Psoas muscle (tissue), 8 donors: ENCODE measurements at regions of chr11 and their contacts with region 1.

Region 1: DNA sequence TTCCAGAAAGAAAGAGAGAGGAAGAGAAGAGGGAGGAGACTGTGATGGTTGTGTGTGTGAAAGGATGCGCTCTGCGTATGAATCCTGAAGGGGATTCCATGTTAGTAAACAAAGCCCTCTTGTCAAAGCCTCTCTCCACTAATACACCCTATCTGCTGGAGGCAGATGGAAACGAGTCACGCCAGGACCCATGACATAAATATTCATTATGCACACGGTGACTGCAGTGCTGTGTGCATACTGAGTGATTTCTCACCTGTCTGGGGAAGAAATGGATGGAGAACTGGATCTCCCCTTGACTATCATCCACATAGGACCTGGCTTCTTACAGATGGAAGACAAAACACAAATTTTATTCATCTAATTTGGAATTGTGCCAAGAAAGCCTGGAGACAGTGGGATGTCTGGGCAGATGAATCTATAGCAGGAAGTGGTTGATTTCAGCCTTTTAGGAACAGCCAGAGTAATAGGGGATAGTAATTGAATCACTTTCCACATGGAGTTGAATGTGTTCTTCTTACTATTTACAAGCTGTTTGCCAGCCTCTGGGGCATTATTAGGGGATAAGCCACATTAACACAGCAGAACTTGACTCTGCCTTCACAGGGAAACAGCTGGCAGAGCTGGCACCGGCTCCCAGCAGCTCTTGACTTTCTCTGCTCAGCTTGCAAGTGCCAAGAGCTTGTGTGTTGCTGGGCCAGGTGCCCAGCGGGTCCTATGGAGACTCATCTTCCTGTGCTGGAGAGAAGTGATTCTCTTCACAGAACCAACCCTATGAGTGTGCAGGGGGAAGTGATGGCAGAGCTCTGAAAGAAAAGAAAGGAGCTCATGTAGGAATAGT is 9.0 kb downstream of the MTNR1B start:
- DNase-seq: no peak
- ATAC-seq: no peak
- H3K4me3 ChIP-seq: no peak overlapping the region
- H3K27ac ChIP-seq: no peak overlapping the region
- H3K4me1 ChIP-seq: no peaks in the 10 kb centered on the region
- H3K27me3 ChIP-seq: peaks cover 0 to 2% (median 0%) of the 10 kb centered on the region in 3 donors
- CTCF ChIP-seq: no peak

Region 2: GRCh38 chr11:92917927-92918326 is 60.6 kb before region 1 on chr11:
- intact Hi-C with region 1: no loop called
- DNase-seq: no peak
- ATAC-seq: no peak
- H3K4me3 ChIP-seq: no peak overlapping the region
- H3K27ac ChIP-seq: no peak overlapping the region
- H3K4me1 ChIP-seq: no peaks in the 10 kb centered on the region
- H3K27me3 ChIP-seq: peaks cover 0 to 3% (median 0%) of the 10 kb centered on the region in 3 donors
- CTCF ChIP-seq: no peak

Region 3: GRCh38 chr11:93000511-93001476 is 22.3 kb after region 1 on chr11:
- intact Hi-C with region 1: loop called in 1 of 2 experiments (anchors 2 kb)
- DNase-seq: no peak
- ATAC-seq: no peak
- H3K4me3 ChIP-seq: no peak overlapping the region
- H3K27ac ChIP-seq: no peak overlapping the region
- H3K4me1 ChIP-seq: no peaks in the 10 kb centered on the region
- H3K27me3 ChIP-seq: no peaks in the 10 kb centered on the region
- CTCF ChIP-seq: no peak

Region 4: GRCh38 chr11:93718057-93718563 is 739.6 kb after region 1 on chr11:
- intact Hi-C with region 1: no loop called
- DNase-seq: no peak
- ATAC-seq: no peak
- H3K4me3 ChIP-seq: no peak overlapping the region
- H3K27ac ChIP-seq: no peak overlapping the region
- H3K4me1 ChIP-seq: no peaks in the 10 kb centered on the region
- H3K27me3 ChIP-seq: no peaks in the 10 kb centered on the region
- CTCF ChIP-seq: no peak